ENCODE measurements at regions of chr9 and their contacts with region 1.

Region 1: DNA sequence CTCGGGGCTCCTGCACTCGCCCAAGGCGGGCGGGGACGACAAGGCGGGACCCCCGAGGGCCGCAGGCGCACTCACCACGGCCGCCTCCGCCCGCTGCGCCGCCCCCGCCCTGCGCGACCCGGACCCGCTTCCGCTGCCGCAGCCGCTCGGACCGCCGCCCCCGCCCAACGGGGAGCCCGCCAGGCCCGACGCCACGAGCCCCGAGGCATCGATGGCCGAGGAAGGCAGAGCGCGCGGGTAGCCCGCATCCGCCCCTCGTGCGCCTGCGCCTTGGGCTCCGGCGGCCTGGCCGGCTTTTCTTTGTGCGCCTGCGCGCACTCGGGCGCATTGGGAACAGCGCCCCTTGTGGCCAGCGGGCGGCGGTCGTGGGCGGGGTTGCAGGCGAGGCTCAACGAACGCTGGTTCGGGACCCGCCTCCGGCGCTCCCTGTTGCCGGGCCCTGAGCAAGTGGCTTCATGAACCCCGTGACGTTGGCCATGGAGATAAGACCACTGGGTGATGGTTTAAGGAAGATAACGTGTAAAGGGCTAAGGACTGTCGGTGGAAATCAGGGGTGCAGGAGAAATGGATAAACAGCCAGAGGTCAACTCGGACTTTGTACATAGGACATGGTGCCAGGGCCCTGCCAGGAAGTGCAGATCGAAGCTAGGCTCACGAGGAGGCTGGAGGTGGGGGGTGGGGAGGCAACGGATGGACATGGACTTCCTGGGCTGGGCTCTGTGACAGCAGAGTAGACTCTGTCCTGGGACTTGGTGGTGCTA is at the starts of genes C8G and FBXW5:
- DNase-seq: peak; percentile 96 to 99 (median 98)
- ATAC-seq: peak; percentile 78
- H3K4me3 ChIP-seq: peak within 1 kb of the TSS; percentile 95
- H3K27ac ChIP-seq: peak within 1 kb of the TSS; percentile 91
- H3K4me1 ChIP-seq: peaks cover 24 to 93% of the 10 kb centered on the region in 2 experiments
- H3K27me3 ChIP-seq: no peaks in the 10 kb centered on the region
- CTCF ChIP-seq: peak; percentile 93 to 98 (median 94)
- EP300 ChIP-seq: peak; percentile 59
- POLR2A ChIP-seq: 0 out of 2 replicates have a peak, but pooled peaks have one; percentile 34
- RAD21 ChIP-seq: peak in 1 of 2 experiments; percentile 41; a peak in 2 of 4 replicates
- polyA plus RNA-seq, gene C8G: 0.38 TPM in 1 of 2 experiments, not detected in the other
- polyA plus RNA-seq, gene FBXW5: 0.21 to 1.2 TPM

Region 2: GRCh38 chr9:136807281-136808074 is 137.2 kb before region 1 on chr9 and contains the start of gene RABL6:
- CTCF ChIA-PET with region 1: no interaction called
- POLR2A ChIA-PET with region 1: no interaction called
- in situ Hi-C with region 1: no loop called
- intact Hi-C with region 1: no loop called
- DNase-seq: peak; percentile 88 to 95 (median 92)
- ATAC-seq: peak; percentile 72
- H3K4me3 ChIP-seq: peak within 1 kb of the TSS; percentile 97
- H3K27ac ChIP-seq: peak within 1 kb of the TSS; percentile 91
- H3K4me1 ChIP-seq: peaks cover 26 to 56% of the 10 kb centered on the region in 2 experiments
- H3K27me3 ChIP-seq: no peaks in the 10 kb centered on the region
- CTCF ChIP-seq: no peak
- EP300 ChIP-seq: no peak; the same call in 1 of the 2 replicates
- POLR2A ChIP-seq: peak; percentile 81
- RAD21 ChIP-seq: no peak
- polyA plus RNA-seq, gene RABL6: 5.6 to 6.4 TPM

Region 3: GRCh38 chr9:136849038-136849959 is 95.4 kb before region 1 on chr9 and contains the start of gene PHPT1:
- CTCF ChIA-PET with region 1: interaction called, 3 read pairs
- POLR2A ChIA-PET with region 1: no interaction called
- in situ Hi-C with region 1: no loop called
- intact Hi-C with region 1: loop called (anchors 5 kb)
- DNase-seq: peak; percentile 94 to 99 (median 97)
- ATAC-seq: peak; percentile 84
- H3K4me3 ChIP-seq: peak within 1 kb of the TSS; percentile 95
- H3K27ac ChIP-seq: peak within 1 kb of the TSS; percentile 89
- H3K4me1 ChIP-seq: peaks cover 9 to 84% of the 10 kb centered on the region in 2 experiments; a peak in 4 of 5 replicates
- H3K27me3 ChIP-seq: no peaks in the 10 kb centered on the region
- CTCF ChIP-seq: no peak
- EP300 ChIP-seq: peak; percentile 22; the same call in 1 of the 2 replicates
- POLR2A ChIP-seq: peak; percentile 95
- RAD21 ChIP-seq: no peak
- polyA plus RNA-seq, gene PHPT1: 131 to 166 TPM

Region 4: DNA sequence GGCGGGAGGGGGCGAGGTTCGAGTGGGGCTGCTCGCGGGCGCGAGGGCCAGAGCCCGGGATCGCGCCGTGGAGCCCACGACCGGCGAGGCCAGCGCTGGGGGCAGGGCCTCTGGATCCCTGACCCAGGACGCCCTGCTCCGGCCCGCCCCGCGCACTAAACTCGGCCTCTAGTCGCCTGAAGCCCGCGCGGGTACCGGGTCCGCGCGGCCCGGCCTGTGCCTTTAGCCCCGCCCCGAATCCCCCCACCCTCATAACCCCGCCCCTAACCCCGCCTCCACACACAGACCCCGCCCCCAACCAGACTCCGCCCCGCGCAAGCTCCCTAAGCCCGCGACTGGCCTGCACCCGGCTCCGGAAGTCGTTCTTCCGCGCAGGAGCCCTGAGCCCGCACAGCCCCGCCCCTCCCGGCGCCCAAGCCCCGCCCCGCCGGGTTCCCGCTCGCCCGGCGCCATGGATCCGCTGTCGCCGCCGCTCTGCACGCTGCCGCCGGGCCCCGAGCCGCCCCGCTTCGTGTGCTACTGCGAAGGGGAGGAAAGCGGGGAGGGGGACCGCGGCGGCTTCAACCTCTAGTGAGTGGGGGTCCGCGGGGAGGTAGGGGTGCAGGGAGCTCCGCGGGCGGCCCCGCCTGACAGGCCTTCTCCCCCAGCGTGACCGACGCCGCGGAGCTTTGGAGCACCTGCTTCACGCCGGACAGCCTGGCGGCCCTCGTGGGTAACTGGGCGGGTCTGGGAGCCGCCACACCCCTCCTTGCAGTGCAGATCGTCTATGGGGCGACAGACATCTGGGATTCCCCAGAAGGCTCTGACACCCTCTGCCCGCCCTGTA is 47.5 kb after region 1 on chr9 and contains the start of gene PAXX:
- CTCF ChIA-PET with region 1: no interaction called
- POLR2A ChIA-PET with region 1: interaction called, 3 read pairs
- in situ Hi-C with region 1: no loop called
- intact Hi-C with region 1: loop called (anchors 5 kb)
- DNase-seq: peak; percentile 93 to 98 (median 94)
- ATAC-seq: peak; percentile 87
- H3K4me3 ChIP-seq: peak within 1 kb of the TSS; percentile 87
- H3K27ac ChIP-seq: peak within 1 kb of the TSS; percentile 89
- H3K4me1 ChIP-seq: peaks cover 26 to 62% of the 10 kb centered on the region in 2 experiments
- H3K27me3 ChIP-seq: no peaks in the 10 kb centered on the region
- CTCF ChIP-seq: no peak
- EP300 ChIP-seq: no peak
- POLR2A ChIP-seq: peak; percentile 77
- RAD21 ChIP-seq: no peak
- polyA plus RNA-seq, gene PAXX: 1.2 to 6.2 TPM

Region 5: GRCh38 chr9:137029058-137029936 is 84.6 kb after region 1 on chr9:
- CTCF ChIA-PET with region 1: interaction called, 47 read pairs
- POLR2A ChIA-PET with region 1: interaction called, 3 read pairs
- in situ Hi-C with region 1: no loop called
- intact Hi-C with region 1: loop called (anchors 2 kb)
- DNase-seq: peak; percentile 78 to 89 (median 80)
- ATAC-seq: peak; percentile 93
- H3K4me3 ChIP-seq: peak overlapping the region; percentile 66
- H3K27ac ChIP-seq: no peak overlapping the region
- H3K4me1 ChIP-seq: peaks cover 9 to 84% of the 10 kb centered on the region in 2 experiments; a peak in 4 of 5 replicates
- H3K27me3 ChIP-seq: no peaks in the 10 kb centered on the region
- CTCF ChIP-seq: peak; percentile 89 to 92 (median 90)
- EP300 ChIP-seq: no peak; the same call in 1 of the 2 replicates
- POLR2A ChIP-seq: no peak
- RAD21 ChIP-seq: peak; percentile 15 to 49; a peak in 3 of 4 replicates

Region 6: GRCh38 chr9:137168905-137169856 is 224.5 kb after region 1 on chr9:
- CTCF ChIA-PET with region 1: no interaction called
- POLR2A ChIA-PET with region 1: no interaction called
- in situ Hi-C with region 1: no loop called
- intact Hi-C with region 1: no loop called
- DNase-seq: peak in 3 of 4 experiments; percentile 41 to 48 (median 45)
- ATAC-seq: peak; percentile 38
- H3K4me3 ChIP-seq: peak overlapping the region; percentile 13; the same call in 1 of the 2 replicates
- H3K27ac ChIP-seq: no peak overlapping the region
- H3K4me1 ChIP-seq: peaks cover 0 to 98% of the 10 kb centered on the region in 2 experiments; a peak in 2 of 5 replicates
- H3K27me3 ChIP-seq: peaks cover 29 to 55% of the 10 kb centered on the region in 2 experiments; a peak in 4 of 5 replicates
- CTCF ChIP-seq: no peak
- EP300 ChIP-seq: no peak
- POLR2A ChIP-seq: no peak
- RAD21 ChIP-seq: no peak